ENCODE measurements at regions of chr7 and their contacts with region 1.

Region 1: GRCh38 chr7:107563775-107564552 is at the starts of genes COG5 and DUS4L:
- DNase-seq: peak; percentile 77
- H3K4me3 Mint-ChIP-seq: peak within 1 kb of the TSS; percentile 80
- H3K27ac Mint-ChIP-seq: peak within 1 kb of the TSS; percentile 86
- H3K4me1 Mint-ChIP-seq: peaks cover 53% of the 10 kb centered on the region
- H3K27me3 Mint-ChIP-seq: no peaks in the 10 kb centered on the region
- total RNA-seq, gene COG5: 35.2 and 36.0 TPM in 2 replicates
- total RNA-seq, gene DUS4L: 10.8 and 12.8 TPM in 2 replicates

Region 2: GRCh38 chr7:107441581-107442422 is 122.2 kb before region 1 on chr7:
- intact Hi-C with region 1: no loop called
- DNase-seq: no peak
- H3K4me3 Mint-ChIP-seq: no peak overlapping the region
- H3K27ac Mint-ChIP-seq: no peak overlapping the region
- H3K4me1 Mint-ChIP-seq: peaks cover under 1% of the 10 kb centered on the region
- H3K27me3 Mint-ChIP-seq: no peaks in the 10 kb centered on the region

Region 3: GRCh38 chr7:107579885-107580715 is 16.1 kb after region 1 on chr7 and contains the start of gene BCAP29:
- intact Hi-C with region 1: loop called (anchors 1 kb)
- DNase-seq: peak; percentile 68
- H3K4me3 Mint-ChIP-seq: peak within 1 kb of the TSS; percentile 90
- H3K27ac Mint-ChIP-seq: peak within 1 kb of the TSS; percentile 85
- H3K4me1 Mint-ChIP-seq: peaks cover 27% of the 10 kb centered on the region
- H3K27me3 Mint-ChIP-seq: no peaks in the 10 kb centered on the region
- total RNA-seq, gene BCAP29: 46.6 and 52.0 TPM in 2 replicates

Region 4: DNA sequence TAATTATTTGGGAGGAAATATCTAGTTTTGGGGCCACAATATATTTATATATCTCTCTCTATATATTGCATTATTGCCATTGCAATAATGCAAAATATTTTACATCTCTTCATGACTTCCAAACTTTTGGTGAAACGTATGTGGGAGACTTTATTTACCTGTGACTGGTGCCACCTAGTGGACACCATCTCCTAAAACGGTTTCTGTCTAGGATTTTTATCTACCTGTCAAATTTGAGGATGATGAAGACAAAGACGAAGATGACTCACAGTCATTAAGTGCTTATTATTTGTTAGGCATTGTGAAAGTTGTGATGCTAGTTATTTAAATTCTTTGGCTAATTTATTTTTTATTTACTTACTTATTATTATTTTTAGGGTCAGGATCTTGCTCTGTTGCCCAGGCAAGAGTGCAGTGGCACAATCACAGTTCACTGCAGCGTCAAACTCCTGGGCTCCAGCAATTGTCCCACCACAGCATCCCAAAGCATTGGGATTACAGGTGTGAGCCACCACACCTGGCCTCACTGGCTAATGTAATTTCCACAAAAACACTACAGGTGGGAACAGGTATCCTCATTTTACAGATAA is 161.3 kb after region 1 on chr7:
- intact Hi-C with region 1: loop called (anchors 5 kb)
- DNase-seq: peak; percentile 17
- H3K4me3 Mint-ChIP-seq: no peak overlapping the region
- H3K27ac Mint-ChIP-seq: no peak overlapping the region
- H3K4me1 Mint-ChIP-seq: no peaks in the 10 kb centered on the region
- H3K27me3 Mint-ChIP-seq: peaks cover 21% of the 10 kb centered on the region

Region 5: GRCh38 chr7:107879400-107880035 is 315.6 kb after region 1 on chr7:
- intact Hi-C with region 1: loop called (anchors 5 kb)
- DNase-seq: no peak
- H3K4me3 Mint-ChIP-seq: no peak overlapping the region
- H3K27ac Mint-ChIP-seq: no peak overlapping the region
- H3K4me1 Mint-ChIP-seq: peaks cover 27% of the 10 kb centered on the region
- H3K27me3 Mint-ChIP-seq: peaks cover 29% of the 10 kb centered on the region

Region 6: GRCh38 chr7:108135446-108136190 is 571.7 kb after region 1 on chr7:
- intact Hi-C with region 1: no loop called
- DNase-seq: peak; percentile 27
- H3K4me3 Mint-ChIP-seq: peak overlapping the region; percentile 55
- H3K27ac Mint-ChIP-seq: peak overlapping the region; percentile 93
- H3K4me1 Mint-ChIP-seq: peaks cover 38% of the 10 kb centered on the region
- H3K27me3 Mint-ChIP-seq: peaks cover 30% of the 10 kb centered on the region

Measured in activated T-helper 2 cell treated with anti-CD3 and anti-CD28 coated beads, Interferon-gamma antibody, Interleukin-2, Interleukin-4, amounts not matched to agents 10 μg/mL and 5 μg/mL and 100 μg/mL, durations not matched to agents 14 hours and 24 hours and 36 hours (primary cell).